ENCODE measurements at regions of chr13 and their contacts with region 1.

Region 1: GRCh38 chr13:72727417-72728289 is at the starts of genes BORA and MZT1:
- DNase-seq: peak; percentile 85 to 99 (median 93)

Region 2: DNA sequence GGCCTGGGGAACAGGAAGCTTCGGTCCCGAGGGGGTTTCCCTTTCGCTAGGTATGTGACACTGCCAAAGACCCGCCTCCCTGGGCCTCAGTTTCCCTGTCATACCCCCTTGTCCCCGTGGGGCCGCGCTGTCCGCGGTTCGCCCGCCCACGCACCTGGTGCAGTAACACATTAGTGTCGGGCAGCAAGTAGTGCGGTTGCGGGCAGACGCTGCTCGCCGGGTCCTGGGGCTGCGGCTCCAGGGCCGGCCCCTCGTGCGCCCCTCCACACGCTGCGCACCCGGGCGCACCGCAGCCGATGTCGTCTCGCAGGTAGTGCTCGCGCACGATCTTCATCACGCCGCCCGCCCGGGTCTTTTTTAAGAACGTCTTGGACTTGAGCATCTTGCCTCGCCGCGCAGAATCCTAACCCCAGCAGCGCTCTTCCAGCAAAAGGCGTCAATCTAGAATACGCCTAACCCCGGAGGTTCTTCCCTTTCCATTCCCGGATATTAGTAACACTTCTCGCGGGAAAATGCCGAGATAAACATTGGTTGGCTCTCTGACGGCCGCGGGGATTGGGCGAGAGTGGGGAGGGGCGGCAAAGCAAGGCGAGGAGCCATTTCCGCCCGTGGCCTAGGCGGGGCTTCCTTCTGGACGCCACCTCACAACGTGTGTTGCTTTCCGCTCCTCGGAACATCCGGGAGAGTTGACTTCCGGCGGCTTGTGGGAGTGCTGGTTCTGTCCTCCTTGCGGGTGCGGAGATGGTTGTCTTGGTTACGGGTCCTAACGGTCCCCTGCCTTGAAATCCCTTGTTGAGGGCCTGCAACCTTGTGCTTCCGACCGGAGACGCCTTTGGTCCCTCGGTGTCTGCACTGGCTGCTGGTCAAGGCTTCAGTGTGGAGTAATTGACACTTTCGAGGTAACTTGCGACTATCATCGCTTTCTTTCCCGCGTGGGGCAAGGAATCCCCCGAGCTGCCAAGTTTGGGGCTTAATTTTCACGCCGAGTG is 54.1 kb after region 1 on chr13 and contains the starts of genes DIS3 and PIBF1:
- intact Hi-C with region 1: loop called (anchors 2 kb)
- DNase-seq: peak; percentile 94 to 100 (median 98)

Measured in posterior cingulate gyrus (tissue), 11 donors.